ENCODE measurements at regions of chr9 and their contacts with region 1.

Region 1: GRCh38 chr9:122360891-122361290 is 9.9 kb upstream of the PTGS1 start:
- DNase-seq: no peak
- ATAC-seq: no peak
- H3K4me3 ChIP-seq: no peak overlapping the region
- H3K27ac ChIP-seq: no peak overlapping the region
- H3K4me1 ChIP-seq: no peaks in the 10 kb centered on the region
- H3K27me3 ChIP-seq: no peaks in the 10 kb centered on the region
- CTCF ChIP-seq: no peak

Region 2: GRCh38 chr9:122213589-122214413 is 147.1 kb before region 1 on chr9:
- CTCF ChIA-PET with region 1: no interaction called
- POLR2A ChIA-PET with region 1: no interaction called
- intact Hi-C with region 1: no loop called
- DNase-seq: peak; percentile 89
- ATAC-seq: peak; percentile 92
- H3K4me3 ChIP-seq: peak overlapping the region; percentile 67
- H3K27ac ChIP-seq: no peak overlapping the region
- H3K4me1 ChIP-seq: peaks cover 31% of the 10 kb centered on the region
- H3K27me3 ChIP-seq: no peaks in the 10 kb centered on the region
- CTCF ChIP-seq: no peak

Region 3: GRCh38 chr9:122286764-122287163 is 74.1 kb before region 1 on chr9:
- CTCF ChIA-PET with region 1: no interaction called
- POLR2A ChIA-PET with region 1: no interaction called
- intact Hi-C with region 1: no loop called
- DNase-seq: no peak
- ATAC-seq: no peak
- H3K4me3 ChIP-seq: no peak overlapping the region
- H3K27ac ChIP-seq: no peak overlapping the region
- H3K4me1 ChIP-seq: no peaks in the 10 kb centered on the region
- H3K27me3 ChIP-seq: no peaks in the 10 kb centered on the region
- CTCF ChIP-seq: no peak

Region 4: DNA sequence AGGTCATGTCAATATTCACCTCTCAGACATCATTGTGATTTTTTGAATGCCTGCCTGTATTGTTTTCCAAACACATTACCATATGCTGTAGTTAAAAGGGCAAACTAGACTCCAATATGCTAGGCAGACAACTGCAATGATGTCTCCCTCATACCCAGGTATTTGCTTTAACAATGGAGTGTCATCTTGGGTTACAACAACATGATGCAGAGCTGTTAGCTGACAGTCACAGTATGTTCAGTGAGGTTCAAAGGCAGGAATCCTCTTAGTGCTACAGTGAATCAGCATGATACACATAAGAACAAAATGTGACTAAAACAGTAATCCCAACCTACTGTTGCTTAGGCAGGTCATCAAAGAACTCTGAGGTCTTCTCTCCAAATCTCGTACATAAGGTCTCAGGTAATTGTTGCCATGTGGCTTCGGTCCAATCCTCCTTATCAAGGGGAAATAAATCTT is 92.8 kb after region 1 on chr9:
- CTCF ChIA-PET with region 1: no interaction called
- POLR2A ChIA-PET with region 1: no interaction called
- intact Hi-C with region 1: loop called (anchors 10 kb)
- DNase-seq: no peak
- ATAC-seq: no peak
- H3K4me3 ChIP-seq: no peak overlapping the region
- H3K27ac ChIP-seq: no peak overlapping the region
- H3K4me1 ChIP-seq: no peaks in the 10 kb centered on the region
- H3K27me3 ChIP-seq: 0 out of 2 replicates have a peak, but pooled peaks cover 8% of the 10 kb centered on the region
- CTCF ChIP-seq: no peak

Measured in PC-3 (cell line).